ENCODE measurements at regions of chr15 and their contacts with region 1.

Region 1: GRCh38 chr15:36557364-36557763 is 22.1 kb upstream of the CDIN1 start:
- H3K4me3 Mint-ChIP-seq: no peak overlapping the region
- H3K27ac Mint-ChIP-seq: no peak overlapping the region
- H3K4me1 Mint-ChIP-seq: no peaks in the 10 kb centered on the region
- H3K27me3 Mint-ChIP-seq: no peaks in the 10 kb centered on the region

Region 2: DNA sequence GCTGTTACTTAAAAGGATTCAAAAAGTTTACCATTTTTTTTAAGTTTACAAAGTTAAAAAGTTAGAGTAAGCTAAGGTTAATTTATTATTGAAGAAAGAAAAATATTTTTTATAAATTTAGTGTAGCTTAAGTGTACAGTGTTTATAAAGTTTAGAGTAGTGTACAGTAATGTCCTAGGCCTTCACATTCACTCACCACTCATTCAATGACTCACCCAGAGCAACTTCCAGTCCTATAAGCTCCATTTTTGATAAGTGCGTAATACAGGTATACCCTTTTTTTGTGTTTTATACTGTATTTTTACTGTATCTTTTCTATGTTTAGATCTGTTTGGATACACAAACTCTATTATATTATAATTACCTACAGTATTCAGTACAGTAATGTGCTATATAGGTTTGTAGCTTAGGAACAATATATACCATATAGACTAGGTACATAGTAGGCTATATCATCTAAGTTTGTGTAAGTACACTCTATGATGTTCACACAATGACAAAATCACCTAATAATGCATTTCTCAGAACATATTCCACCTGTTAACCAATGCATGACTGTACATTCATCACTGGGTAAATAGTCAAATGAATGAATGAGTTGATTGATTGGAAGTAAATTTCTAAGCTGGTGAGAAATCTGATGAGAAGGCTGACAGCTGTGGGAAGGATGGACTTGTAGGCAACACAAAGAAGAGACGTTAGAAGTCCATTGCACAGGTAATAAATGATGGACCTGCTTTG is 73.2 kb before region 1 on chr15:
- intact Hi-C with region 1: no loop called
- H3K4me3 Mint-ChIP-seq: no peak overlapping the region
- H3K27ac Mint-ChIP-seq: no peak overlapping the region
- H3K4me1 Mint-ChIP-seq: no peaks in the 10 kb centered on the region
- H3K27me3 Mint-ChIP-seq: no peaks in the 10 kb centered on the region

Region 3: GRCh38 chr15:36617529-36618196 is 60.3 kb after region 1 on chr15:
- intact Hi-C with region 1: loop called (anchors 10 kb)
- H3K4me3 Mint-ChIP-seq: no peak overlapping the region
- H3K27ac Mint-ChIP-seq: no peak overlapping the region
- H3K4me1 Mint-ChIP-seq: no peaks in the 10 kb centered on the region
- H3K27me3 Mint-ChIP-seq: no peaks in the 10 kb centered on the region

Measured in dendritic cell treated with granulocyte-macrophage colony-stimulating factor and Interleukin-4, amounts not matched to agents 40 ng/mL and 50 ng/mL, for 4 days (primary cell).